ENCODE measurements at regions of chr14 and their contacts with region 1.

Region 1: GRCh38 chr14:44912041-44912869 is 49.5 kb downstream of the KLHL28 start:
- DNase-seq: no peak

Region 2: GRCh38 chr14:45267071-45267470 is 354.8 kb after region 1 on chr14:
- intact Hi-C with region 1: loop called (anchors 5 kb)
- DNase-seq: no peak